PC-3 (cell line): ENCODE measurements at regions of chr2 and their contacts with region 1.

Region 1: GRCh38 chr2:10064932-10065772 is 15.1 kb downstream of the CYS1 start:
- DNase-seq: no peak
- ATAC-seq: no peak
- H3K4me3 ChIP-seq: no peak overlapping the region
- H3K27ac ChIP-seq: no peak overlapping the region
- H3K4me1 ChIP-seq: no peaks in the 10 kb centered on the region
- H3K27me3 ChIP-seq: no peaks in the 10 kb centered on the region
- CTCF ChIP-seq: no peak

Region 2: DNA sequence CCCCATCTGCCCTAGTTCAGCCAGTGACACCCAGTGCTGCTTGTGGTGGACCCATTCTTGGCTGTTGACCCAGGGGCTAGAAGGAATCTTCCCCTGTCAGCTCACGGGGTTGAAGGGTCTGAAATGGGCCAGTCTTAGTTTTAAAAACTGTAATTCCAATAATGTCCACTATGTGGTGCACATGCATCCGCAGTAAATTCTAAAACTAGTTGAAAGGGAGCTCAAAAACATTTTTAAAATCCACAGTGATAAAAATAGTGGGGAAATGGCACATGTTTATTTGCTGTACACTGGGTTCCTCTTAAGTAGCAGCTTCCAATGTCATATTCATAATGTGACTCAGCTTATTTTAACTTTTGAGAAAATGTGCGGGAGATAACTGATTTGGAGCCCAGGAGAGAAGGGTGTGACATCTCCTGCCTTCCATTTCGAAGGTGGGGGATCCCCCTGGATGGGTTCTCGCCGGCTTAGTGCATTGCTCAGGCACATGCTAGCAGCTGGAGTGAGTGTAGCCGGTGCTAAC is 80.9 kb before region 1 on chr2:
- CTCF ChIA-PET with region 1: no interaction called
- POLR2A ChIA-PET with region 1: no interaction called
- intact Hi-C with region 1: no loop called
- DNase-seq: peak; percentile 78
- ATAC-seq: peak; percentile 43; the same call in 1 of the 2 replicates
- H3K4me3 ChIP-seq: no peak overlapping the region
- H3K27ac ChIP-seq: no peak overlapping the region
- H3K4me1 ChIP-seq: 0 out of 2 replicates have a peak, but pooled peaks cover 3% of the 10 kb centered on the region
- H3K27me3 ChIP-seq: no peaks in the 10 kb centered on the region
- CTCF ChIP-seq: peak; percentile 79

Region 3: GRCh38 chr2:10079234-10079869 is 14.2 kb after region 1 on chr2:
- CTCF ChIA-PET with region 1: interaction called, 11 read pairs
- POLR2A ChIA-PET with region 1: no interaction called
- intact Hi-C with region 1: no loop called
- DNase-seq: peak; percentile 45
- ATAC-seq: peak; percentile 68
- H3K4me3 ChIP-seq: peak overlapping the region; percentile 53
- H3K27ac ChIP-seq: no peak overlapping the region
- H3K4me1 ChIP-seq: no peaks in the 10 kb centered on the region
- H3K27me3 ChIP-seq: peaks cover 76% of the 10 kb centered on the region
- CTCF ChIP-seq: no peak